ENCODE measurements at regions of chr5 and their contacts with region 1.

Region 1: GRCh38 chr5:96868603-96869371 is 7.5 kb upstream of the ERAP2 start:
- DNase-seq: peak in 13 of 42 donors; percentile 20 to 73 (median 52)

Region 2: DNA sequence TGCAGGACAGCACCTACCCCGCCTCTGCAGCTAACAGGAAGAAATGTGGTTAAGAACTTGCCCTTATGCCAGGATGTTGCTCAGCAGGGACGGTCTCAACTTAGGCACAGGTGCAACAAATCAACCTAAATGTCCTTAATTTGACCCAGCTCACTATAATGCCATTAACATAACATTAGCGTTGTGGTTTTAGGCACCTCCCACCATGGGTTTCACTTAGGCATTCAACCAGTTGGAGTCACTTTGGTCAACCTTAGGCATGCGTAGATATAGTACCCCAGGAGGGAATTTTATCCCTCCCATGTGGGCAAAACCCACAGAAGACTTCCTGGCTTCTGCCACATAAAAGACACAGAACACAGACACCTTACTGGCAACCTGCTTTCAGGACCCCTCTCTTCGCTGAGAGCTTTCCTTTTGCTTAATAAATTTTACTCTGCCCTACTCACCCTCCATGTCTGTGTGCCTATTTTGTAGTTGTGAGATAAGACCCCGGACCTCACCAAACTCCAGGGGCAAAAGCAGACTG is 52.3 kb before region 1 on chr5:
- intact Hi-C with region 1: loop called (anchors 10 kb)
- DNase-seq: no peak

Region 3: GRCh38 chr5:97162045-97162444 is 293.3 kb after region 1 on chr5:
- intact Hi-C with region 1: loop called (anchors 5 kb)
- DNase-seq: peak in 39 of 42 donors; percentile 17 to 91 (median 72)

Measured in head of caudate nucleus (tissue), 42 donors.